ENCODE measurements at regions of chr7 and their contacts with region 1.

Region 1: DNA sequence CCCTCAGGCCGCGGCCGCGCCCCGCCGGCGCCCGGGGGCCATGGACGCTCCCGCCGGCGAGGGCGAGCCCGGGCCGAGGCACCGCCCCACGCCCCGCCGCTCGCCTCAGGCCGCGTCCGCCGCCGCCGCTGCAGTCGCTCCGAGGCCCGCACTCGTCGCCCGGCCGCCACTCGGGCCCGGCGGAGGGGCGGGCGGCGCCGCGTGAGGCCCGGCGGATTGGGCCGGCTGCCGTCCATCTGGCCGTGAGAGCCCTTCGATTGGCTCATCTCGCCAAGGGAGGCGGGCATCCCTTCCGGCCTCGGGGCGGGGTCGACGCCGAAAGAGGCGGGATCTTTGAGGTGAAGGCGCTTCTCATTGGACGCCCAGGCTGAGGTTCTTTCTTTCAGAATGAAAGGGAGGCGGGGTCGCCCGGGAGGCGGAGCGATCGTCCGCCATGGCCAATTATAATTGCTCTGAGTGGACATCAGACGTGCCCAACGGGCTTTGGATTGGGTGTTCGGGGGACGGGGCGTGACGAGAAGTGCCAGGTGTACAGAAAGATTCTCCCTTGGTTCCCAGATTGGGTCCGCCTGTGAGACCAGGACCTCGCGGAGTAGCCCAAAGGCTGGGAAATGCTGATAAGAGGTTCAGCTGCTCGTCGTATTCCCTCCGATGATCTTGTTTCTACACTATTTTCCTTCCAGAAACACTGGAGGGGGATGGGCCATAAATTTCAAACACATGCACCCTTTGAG is at the start of gene GNA12:
- DNase-seq: peak; percentile 99
- ATAC-seq: peak; percentile 96
- H3K4me3 Mint-ChIP-seq: peak within 1 kb of the TSS; percentile 75
- H3K27ac Mint-ChIP-seq: peak within 1 kb of the TSS; percentile 44
- H3K4me1 Mint-ChIP-seq: peaks cover 23% of the 10 kb centered on the region
- H3K27me3 Mint-ChIP-seq: no peaks in the 10 kb centered on the region
- total RNA-seq, gene GNA12: 19.5 to 22.6 TPM

Region 2: DNA sequence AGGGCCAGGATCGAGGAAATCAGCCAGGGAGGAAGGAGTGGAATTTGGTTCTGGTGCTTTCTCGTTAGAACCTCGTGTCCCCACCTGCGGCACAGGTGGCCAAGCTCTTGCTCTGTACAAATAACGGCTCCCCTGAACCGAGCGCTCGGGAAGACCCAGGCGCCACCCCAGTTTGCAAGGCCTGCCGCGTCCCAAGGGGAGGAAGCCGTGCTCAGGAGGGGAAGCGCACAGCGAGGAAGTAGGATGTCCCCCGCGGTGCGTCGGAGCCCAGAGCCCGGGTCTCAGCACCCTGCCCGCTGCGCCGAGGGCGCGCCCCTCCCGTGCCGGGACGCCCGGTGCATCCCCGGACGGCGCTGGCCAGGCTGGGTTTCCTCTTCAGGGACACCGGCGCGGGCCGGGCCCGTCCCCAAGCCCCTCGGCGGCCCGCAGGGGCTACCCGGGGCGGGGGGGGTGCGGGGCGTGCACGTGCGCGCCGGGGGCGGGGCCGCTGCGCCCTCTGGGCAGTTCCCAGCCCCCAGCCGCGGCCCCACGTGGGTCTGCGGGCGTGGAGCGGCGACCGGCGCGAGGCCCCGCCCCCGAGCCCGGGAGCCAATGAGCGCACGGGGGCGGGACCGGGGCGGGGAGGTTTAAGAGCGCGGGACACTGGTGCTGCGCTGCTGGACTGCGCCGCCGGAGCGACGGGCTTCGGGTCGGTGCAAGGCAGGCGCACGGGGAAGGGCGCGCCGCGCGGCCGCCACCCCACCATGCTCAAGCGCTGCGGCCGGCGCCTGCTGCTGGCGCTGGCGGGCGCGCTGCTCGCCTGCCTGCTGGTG is 325.0 kb before region 1 on chr7 and contains the start of gene LFNG:
- CTCF ChIA-PET with region 1: no interaction called
- POLR2A ChIA-PET with region 1: no interaction called
- intact Hi-C with region 1: loop called (anchors 1 to 10 kb)
- DNase-seq: peak; percentile 91
- ATAC-seq: peak; percentile 75
- H3K4me3 Mint-ChIP-seq: peak within 1 kb of the TSS; percentile 89
- H3K27ac Mint-ChIP-seq: peak within 1 kb of the TSS; percentile 73
- H3K4me1 Mint-ChIP-seq: peaks cover 32% of the 10 kb centered on the region
- H3K27me3 Mint-ChIP-seq: no peaks in the 10 kb centered on the region
- total RNA-seq, gene LFNG: 14.9 to 23.3 TPM

Region 3: GRCh38 chr7:2529161-2530070 is 314.9 kb before region 1 on chr7:
- CTCF ChIA-PET with region 1: no interaction called
- POLR2A ChIA-PET with region 1: no interaction called
- intact Hi-C with region 1: loop called in 1 of 2 experiments (anchors 10 kb)
- DNase-seq: peak; percentile 79
- ATAC-seq: peak; percentile 58
- H3K4me3 Mint-ChIP-seq: peak overlapping the region; percentile 61
- H3K27ac Mint-ChIP-seq: peak overlapping the region; percentile 94
- H3K4me1 Mint-ChIP-seq: peaks cover 47% of the 10 kb centered on the region
- H3K27me3 Mint-ChIP-seq: no peaks in the 10 kb centered on the region

Region 4: GRCh38 chr7:2632733-2633537 is 211.4 kb before region 1 on chr7:
- CTCF ChIA-PET with region 1: no interaction called
- POLR2A ChIA-PET with region 1: no interaction called
- intact Hi-C with region 1: loop called in 1 of 2 experiments (anchors 1 kb)
- DNase-seq: peak; percentile 77
- ATAC-seq: peak; percentile 7
- H3K4me3 Mint-ChIP-seq: peak overlapping the region; percentile 91
- H3K27ac Mint-ChIP-seq: peak overlapping the region; percentile 84
- H3K4me1 Mint-ChIP-seq: peaks cover 14% of the 10 kb centered on the region
- H3K27me3 Mint-ChIP-seq: no peaks in the 10 kb centered on the region

Region 5: GRCh38 chr7:2720582-2721491 is 123.5 kb before region 1 on chr7:
- CTCF ChIA-PET with region 1: no interaction called
- POLR2A ChIA-PET with region 1: no interaction called
- intact Hi-C with region 1: loop called in 1 of 2 experiments (anchors 1 kb)
- DNase-seq: peak; percentile 95
- ATAC-seq: peak; percentile 86
- H3K4me3 Mint-ChIP-seq: no peak overlapping the region
- H3K27ac Mint-ChIP-seq: peak overlapping the region; percentile 32
- H3K4me1 Mint-ChIP-seq: peaks cover 49% of the 10 kb centered on the region
- H3K27me3 Mint-ChIP-seq: no peaks in the 10 kb centered on the region

Region 6: DNA sequence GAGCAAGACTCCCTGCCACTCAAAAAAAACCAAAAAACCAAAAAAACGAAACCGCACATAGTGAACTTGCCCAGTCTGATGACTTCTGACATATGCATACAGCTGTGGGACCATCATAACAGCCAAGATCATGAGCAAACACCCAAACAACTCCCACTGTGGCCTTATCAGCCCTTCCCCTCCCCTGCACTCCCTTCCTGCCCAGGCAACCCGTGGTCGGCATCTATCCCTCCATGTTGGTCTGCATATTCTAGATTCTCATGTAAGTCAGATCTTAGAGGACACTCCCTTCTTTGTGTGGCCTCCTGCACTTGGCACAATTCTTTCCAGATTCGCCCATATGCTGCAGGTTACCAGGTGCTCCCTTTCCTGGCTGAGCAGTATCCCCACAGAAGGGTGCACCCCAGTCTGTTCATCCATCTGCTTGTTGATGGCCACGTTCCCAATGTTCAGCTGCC is 73.0 kb before region 1 on chr7:
- CTCF ChIA-PET with region 1: no interaction called
- POLR2A ChIA-PET with region 1: no interaction called
- intact Hi-C with region 1: loop called in 1 of 2 experiments (anchors 1 kb)
- DNase-seq: no peak
- ATAC-seq: no peak
- H3K4me3 Mint-ChIP-seq: no peak overlapping the region
- H3K27ac Mint-ChIP-seq: peak overlapping the region; percentile 90
- H3K4me1 Mint-ChIP-seq: peaks cover 40% of the 10 kb centered on the region
- H3K27me3 Mint-ChIP-seq: no peaks in the 10 kb centered on the region

Region 7: GRCh38 chr7:2800931-2801688 is 43.2 kb before region 1 on chr7:
- CTCF ChIA-PET with region 1: no interaction called
- POLR2A ChIA-PET with region 1: no interaction called
- intact Hi-C with region 1: no loop called
- DNase-seq: peak; percentile 24
- ATAC-seq: peak; percentile 44
- H3K4me3 Mint-ChIP-seq: no peak overlapping the region
- H3K27ac Mint-ChIP-seq: peak overlapping the region; percentile 4
- H3K4me1 Mint-ChIP-seq: peaks cover 43% of the 10 kb centered on the region
- H3K27me3 Mint-ChIP-seq: no peaks in the 10 kb centered on the region

Region 8: GRCh38 chr7:4791738-4792536 is 1947.6 kb after region 1 on chr7:
- CTCF ChIA-PET with region 1: no interaction called
- POLR2A ChIA-PET with region 1: no interaction called
- intact Hi-C with region 1: loop called in 1 of 2 experiments (anchors 5 kb)
- DNase-seq: peak; percentile 93
- ATAC-seq: peak; percentile 93
- H3K4me3 Mint-ChIP-seq: no peak overlapping the region
- H3K27ac Mint-ChIP-seq: no peak overlapping the region
- H3K4me1 Mint-ChIP-seq: peaks cover 6% of the 10 kb centered on the region
- H3K27me3 Mint-ChIP-seq: no peaks in the 10 kb centered on the region

Measured in activated CD4-positive, alpha-beta T cell treated with anti-CD3 and anti-CD28 coated beads for 36 hours (primary cell).